Posterior cingulate gyrus (tissue), 11 donors: ENCODE measurements at regions of chr2 and their contacts with region 1.

Region 1: GRCh38 chr2:241149925-241150659 is at the start of gene PPP1R7:
- DNase-seq: peak; percentile 90 to 99 (median 94)

Region 2: DNA sequence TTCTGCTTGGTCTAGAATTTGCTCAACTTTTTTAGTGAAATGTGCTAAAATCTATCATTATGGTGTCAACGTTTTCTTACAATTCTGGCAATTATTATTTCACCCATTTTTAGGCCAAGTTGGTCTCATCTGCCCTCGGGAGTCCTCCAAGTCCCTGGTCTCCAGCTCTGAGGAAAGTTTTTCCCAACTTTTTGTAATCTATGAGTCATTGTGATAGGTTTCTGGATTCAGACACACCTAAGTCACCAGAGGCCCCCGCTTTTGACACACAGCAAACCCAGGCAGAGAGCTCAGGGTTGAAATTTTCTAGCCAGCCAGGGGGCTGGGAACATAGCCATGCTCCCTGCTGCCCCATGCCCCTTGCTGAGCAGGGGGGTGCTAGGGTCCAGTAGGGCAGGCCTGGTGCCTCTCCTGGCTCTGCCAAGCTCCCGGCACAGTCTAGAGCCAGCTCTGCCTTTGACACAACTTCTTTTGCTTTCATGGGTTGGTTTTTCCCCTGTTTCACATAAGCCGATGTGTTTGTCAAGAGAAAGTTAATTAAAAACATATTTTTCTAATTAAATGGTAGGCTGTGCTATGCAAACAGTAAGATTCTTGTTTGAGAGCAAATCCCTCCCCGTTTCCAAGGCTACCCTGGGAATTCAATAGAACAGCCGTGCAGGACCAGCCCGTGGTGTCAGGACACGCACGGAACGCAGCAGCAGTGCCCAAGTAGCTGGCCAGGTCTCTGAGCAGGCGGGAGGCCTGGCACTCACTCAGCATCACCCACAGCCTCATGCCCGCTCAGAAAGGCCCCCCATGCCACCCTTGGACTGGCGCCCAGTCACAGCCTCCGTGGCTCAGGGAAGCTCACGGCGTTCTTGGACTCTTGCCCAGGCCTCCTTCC is 177.2 kb before region 1 on chr2:
- intact Hi-C with region 1: no loop called
- DNase-seq: peak in 5 of 10 donors; percentile 43 to 87 (median 58)

Region 3: GRCh38 chr2:241102239-241102803 is 47.8 kb before region 1 on chr2 and contains the start of gene MTERF4:
- intact Hi-C with region 1: loop called (anchors 2 kb)
- DNase-seq: peak; percentile 79 to 98 (median 89)

Region 4: DNA sequence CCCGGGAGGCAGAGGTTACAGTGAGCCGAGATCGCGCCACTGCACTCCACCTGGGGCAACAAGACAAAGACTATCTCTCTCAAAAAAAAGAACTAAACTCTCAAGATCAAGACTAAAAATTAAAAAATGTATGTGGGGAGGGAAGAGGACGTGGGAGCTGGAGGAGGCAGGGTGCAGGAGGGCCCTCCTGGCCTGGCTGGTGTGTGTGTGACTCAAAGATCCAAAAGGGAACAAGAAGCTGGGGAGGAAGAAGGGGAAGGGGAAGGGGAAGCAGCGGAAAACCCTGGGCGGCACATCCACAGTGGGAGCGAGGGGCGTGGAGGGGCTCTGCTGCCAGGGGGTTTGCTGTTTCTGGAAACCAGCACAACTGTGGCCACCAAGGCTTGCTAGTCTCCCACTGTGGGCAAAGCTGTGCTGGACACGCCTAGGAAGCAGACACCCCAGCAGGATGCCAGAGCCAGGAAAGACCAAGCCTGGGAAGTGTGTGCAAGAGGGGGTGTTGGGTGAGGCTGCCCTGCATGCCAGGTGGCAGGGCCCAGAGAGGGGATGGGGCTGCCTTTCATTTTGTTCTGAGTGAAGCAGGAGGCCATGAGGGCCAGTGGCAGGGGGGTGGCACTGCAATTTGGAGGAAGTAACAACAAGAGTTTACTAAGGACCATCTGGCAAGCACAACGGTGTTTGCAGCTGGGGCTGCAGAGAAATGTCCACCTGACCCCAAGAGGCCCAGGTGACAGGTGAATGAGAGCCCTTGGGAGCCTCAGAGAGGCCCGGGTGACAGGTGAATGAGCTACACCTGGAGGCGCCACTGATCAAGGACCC is 82.9 kb after region 1 on chr2:
- intact Hi-C with region 1: loop called (anchors 10 kb)
- DNase-seq: peak in 3 of 10 donors; percentile 62 to 75 (median 70)